Right cardiac atrium (tissue), 5 donors: ENCODE measurements at regions of chr12 and their contacts with region 1.

Region 1: DNA sequence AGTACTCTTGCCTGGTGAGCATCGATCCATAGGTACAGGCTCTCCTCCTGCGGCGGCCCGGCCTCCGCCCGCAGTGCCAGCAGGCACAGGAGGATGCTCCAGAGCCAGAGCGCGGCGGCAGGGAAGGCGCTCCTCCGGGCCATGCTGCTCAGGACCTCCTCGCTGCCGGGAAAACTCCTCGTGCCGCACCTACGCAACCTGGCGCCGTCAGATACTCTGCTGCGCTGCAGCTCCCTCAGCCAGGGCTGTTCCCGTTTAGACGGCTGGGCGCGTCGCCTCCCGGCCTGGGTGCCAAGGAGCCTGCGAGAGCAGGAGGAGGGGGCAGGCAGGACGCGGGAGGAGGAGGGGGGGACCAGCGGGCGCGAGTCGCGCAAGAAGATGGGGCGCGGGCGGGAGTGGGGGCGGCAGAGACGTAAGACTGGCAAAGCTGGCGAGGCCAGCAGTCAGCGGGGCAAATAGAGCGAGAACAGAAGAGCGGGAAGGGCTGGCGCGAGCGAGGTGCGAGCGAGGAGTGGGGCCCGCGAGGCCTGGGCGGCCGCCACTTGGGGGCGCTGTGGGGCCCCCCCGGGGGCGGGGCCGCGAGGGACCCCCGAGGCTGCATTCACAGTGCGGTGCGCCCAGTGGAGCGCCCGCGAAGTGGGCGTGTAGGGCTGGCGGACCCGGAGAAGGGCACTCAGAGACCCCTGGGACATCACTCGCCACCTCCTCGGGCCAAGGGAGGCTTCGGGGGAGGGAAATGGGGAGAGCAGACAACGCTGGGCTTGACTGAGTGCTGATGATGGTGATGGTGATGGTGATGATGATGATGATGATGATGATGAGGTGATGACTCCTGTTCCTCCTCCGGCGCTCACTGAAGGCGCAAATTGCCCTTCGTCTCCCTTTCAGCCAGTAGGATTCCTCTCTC is at the start of gene WIF1:
- DNase-seq: peak; percentile 37 to 65 (median 61)
- ATAC-seq: peak; percentile 54 to 67
- H3K4me3 ChIP-seq: peak within 1 kb of the TSS; percentile 20
- H3K27ac ChIP-seq: no peak within 1 kb of the TSS
- H3K4me1 ChIP-seq: no peaks in the 10 kb centered on the region
- H3K27me3 ChIP-seq: peaks cover 5% of the 10 kb centered on the region
- total RNA-seq, gene WIF1: 0.29 to 0.67 TPM in 2 of 4 donors, not detected in the others

Region 2: GRCh38 chr12:64796208-64796845 is 325.0 kb before region 1 on chr12:
- intact Hi-C with region 1: loop called in 3 of 4 experiments (anchors 10 kb)
- DNase-seq: peak in 1 of 3 donors; percentile 36
- ATAC-seq: peak; percentile 80 to 82
- H3K4me3 ChIP-seq: no peak overlapping the region
- H3K27ac ChIP-seq: no peak overlapping the region
- H3K4me1 ChIP-seq: no peaks in the 10 kb centered on the region
- H3K27me3 ChIP-seq: no peaks in the 10 kb centered on the region

Region 3: GRCh38 chr12:64801381-64801780 is 319.9 kb before region 1 on chr12:
- intact Hi-C with region 1: loop called in 3 of 4 experiments (anchors 10 kb)
- DNase-seq: no peak
- ATAC-seq: no peak
- H3K4me3 ChIP-seq: no peak overlapping the region
- H3K27ac ChIP-seq: no peak overlapping the region
- H3K4me1 ChIP-seq: no peaks in the 10 kb centered on the region
- H3K27me3 ChIP-seq: no peaks in the 10 kb centered on the region